Activated T-helper 1 cell treated with anti-CD3 and anti-CD28 coated beads, Interleukin-12 subunit alpha, Interleukin-12 subunit beta, Interleukin-2, Interleukin-4 antibody, amounts not matched to agents 30 ng/mL and 10 ng/mL and 1 ng/mL, durations not matched to agents 14 hours and 24 hours and 36 hours (primary cell): ENCODE measurements at regions of chr15 and their contacts with region 1.

Region 1: DNA sequence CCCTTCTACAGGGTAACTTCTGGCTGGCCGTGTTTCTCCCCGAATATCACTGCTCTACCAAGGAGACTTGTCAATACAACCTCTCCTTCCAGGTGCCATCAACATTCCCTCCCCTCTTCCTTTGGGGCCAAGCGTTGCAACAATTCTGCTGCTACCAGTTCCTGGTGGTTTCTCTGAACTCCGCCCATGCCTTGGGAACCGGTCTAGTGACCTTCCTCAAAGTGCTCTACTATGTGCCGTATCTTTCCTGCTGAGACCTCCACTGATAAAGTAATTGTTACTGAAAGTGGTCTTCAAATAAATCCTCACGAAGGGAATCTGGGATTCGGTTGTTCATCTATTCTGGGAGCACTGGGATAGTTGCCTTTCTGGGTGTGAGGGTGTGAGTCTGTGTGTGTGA is 26.2 kb downstream of the PCSK6 start:
- DNase-seq: no peak
- H3K4me3 Mint-ChIP-seq: no peak overlapping the region
- H3K27ac Mint-ChIP-seq: no peak overlapping the region
- H3K4me1 Mint-ChIP-seq: peaks cover 29% of the 10 kb centered on the region
- H3K27me3 Mint-ChIP-seq: peaks cover 6% of the 10 kb centered on the region

Region 2: GRCh38 chr15:101333401-101333800 is 129.9 kb before region 1 on chr15:
- intact Hi-C with region 1: loop called (anchors 1 kb)
- DNase-seq: no peak
- H3K4me3 Mint-ChIP-seq: no peak overlapping the region
- H3K27ac Mint-ChIP-seq: no peak overlapping the region
- H3K4me1 Mint-ChIP-seq: no peaks in the 10 kb centered on the region
- H3K27me3 Mint-ChIP-seq: peaks cover 7% of the 10 kb centered on the region

Region 3: DNA sequence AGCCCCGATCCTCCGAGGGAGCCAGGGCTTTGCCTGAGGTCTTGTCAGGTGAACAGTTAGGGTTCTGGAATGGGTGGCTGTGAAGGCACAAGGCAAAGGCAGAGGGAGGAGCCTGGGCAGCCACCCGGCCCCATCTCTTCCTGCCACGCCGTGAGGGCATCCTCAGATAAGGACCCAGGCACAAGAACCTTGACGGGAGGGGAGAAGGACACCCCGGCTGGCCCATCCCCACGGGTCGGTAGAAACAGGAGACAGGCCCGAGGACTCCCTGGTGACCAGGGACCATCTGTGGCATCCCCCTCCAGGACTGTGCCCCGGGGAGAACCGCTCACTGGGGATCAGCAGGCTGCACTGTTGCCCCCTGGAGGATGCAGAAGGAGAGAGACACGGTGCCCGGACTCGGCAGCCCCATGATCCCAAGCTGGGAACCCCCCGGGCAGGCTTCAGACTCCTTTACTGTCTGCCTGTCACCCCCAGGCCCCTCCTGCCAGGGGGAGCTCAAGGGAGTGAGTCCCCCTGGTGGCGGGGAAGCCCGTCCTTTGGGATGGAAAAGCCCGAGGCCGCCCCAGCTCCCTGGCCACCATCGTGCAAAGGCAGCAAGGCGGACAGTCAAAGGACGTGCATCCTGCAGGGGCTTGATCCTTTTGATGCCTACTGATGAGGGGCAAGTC is 38.5 kb after region 1 on chr15:
- intact Hi-C with region 1: loop called (anchors 1 kb)
- DNase-seq: peak; percentile 21
- H3K4me3 Mint-ChIP-seq: peak overlapping the region; percentile 24
- H3K27ac Mint-ChIP-seq: peak overlapping the region; percentile 54
- H3K4me1 Mint-ChIP-seq: peaks cover 27% of the 10 kb centered on the region
- H3K27me3 Mint-ChIP-seq: peaks cover 4% of the 10 kb centered on the region